ENCODE measurements at regions of chr2 and their contacts with region 1.

Region 1: DNA sequence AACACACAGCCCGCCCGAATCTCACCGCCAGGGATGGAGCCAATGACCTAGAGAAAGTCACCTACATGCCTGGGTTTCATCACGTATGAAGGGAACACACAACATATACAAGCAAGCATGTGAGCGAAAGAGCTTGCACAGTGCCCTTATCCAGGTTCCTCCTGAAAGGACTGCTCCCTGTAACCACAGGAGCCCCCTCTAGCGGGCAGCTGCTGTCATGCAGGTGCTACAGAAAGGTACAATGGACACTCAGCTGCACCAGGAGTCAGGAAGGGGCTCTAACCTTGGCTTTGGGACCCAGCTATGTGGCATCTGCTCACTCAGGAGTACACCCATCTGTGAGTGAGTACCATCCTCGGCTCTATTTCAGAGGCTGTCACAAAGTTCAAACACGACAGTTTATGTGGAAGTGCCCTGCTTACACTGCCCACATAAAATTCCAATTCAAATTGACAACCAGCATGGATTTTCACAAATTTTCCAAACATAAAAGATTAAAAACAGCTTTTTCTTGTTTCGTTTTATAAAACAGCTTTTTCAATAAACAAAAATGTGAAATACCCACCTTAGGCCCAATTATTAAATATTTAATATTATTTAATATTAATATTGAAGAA is 3.5 kb downstream of the NDUFA10 start:
- DNase-seq: peak; percentile 79
- H3K4me3 ChIP-seq: no peak overlapping the region
- H3K27ac ChIP-seq: no peak overlapping the region
- H3K4me1 ChIP-seq: peaks cover 10 to 26% (median 12%) of the 10 kb centered on the region in 4 donors
- H3K27me3 ChIP-seq: no peaks in the 10 kb centered on the region
- CTCF ChIP-seq: peak; percentile 64 to 85 (median 70)
- EP300 ChIP-seq: no peak
- POLR2A ChIP-seq: no peak

Region 2: DNA sequence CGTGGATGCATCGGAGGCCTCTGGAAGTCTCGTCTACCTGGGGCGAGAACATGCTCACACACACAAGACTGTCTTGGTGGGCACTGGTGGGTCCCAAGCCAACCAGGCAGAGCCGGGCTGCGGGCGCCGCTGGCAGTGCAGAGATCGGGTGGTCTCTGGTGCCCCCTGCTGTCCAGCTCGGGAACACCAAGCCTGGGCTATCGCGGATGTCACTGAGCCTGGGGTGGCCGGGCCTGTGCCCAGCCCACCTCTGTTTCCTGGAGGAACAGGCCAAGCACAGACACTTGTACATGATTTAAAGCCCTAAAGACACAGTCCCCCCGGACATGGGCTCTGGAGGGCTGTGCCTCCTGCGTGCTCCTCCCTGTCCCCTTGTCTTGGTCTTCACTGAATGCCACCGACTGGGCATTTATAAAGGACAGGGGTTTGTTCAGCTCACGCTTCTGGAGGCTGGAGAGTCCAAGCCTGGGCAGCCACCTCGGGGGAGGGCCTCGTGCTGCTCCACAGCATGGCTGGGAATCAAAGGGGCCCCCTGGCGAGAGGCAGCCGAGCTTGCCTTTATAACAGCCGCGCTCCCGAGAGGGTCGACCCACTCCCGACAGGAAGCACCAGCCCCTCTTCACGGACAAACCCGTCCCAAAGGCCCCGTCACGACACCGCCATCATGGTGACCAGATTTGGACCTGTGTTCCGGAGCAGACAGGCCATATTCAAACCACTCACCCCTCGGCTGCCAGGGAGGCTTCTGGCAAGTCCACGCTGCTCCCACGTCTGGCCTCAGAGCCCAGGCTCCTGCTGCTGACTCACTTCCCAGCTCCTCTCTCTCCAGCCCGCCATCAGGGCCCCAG is 122.4 kb after region 1 on chr2:
- in situ Hi-C with region 1: no loop called
- intact Hi-C with region 1: no loop called
- DNase-seq: peak; percentile 77
- H3K4me3 ChIP-seq: no peak overlapping the region
- H3K27ac ChIP-seq: no peak overlapping the region
- H3K4me1 ChIP-seq: peaks cover 0 to 3% (median 0%) of the 10 kb centered on the region in 4 donors
- H3K27me3 ChIP-seq: no peaks in the 10 kb centered on the region
- CTCF ChIP-seq: peak; percentile 88 to 96 (median 93)
- EP300 ChIP-seq: no peak
- POLR2A ChIP-seq: no peak

Region 3: GRCh38 chr2:241096979-241097378 is 1075.4 kb after region 1 on chr2:
- in situ Hi-C with region 1: no loop called
- intact Hi-C with region 1: loop called (anchors 5 kb)
- DNase-seq: no peak
- H3K4me3 ChIP-seq: no peak overlapping the region
- H3K27ac ChIP-seq: no peak overlapping the region
- H3K4me1 ChIP-seq: peaks cover 0 to 33% (median 9%) of the 10 kb centered on the region in 4 donors
- H3K27me3 ChIP-seq: no peaks in the 10 kb centered on the region
- CTCF ChIP-seq: no peak
- EP300 ChIP-seq: no peak
- POLR2A ChIP-seq: no peak

Measured in transverse colon (tissue), 4 donors.